Esophagus muscularis mucosa (tissue), 4 donors: ENCODE measurements at regions of chr15 and their contacts with region 1.

Region 1: DNA sequence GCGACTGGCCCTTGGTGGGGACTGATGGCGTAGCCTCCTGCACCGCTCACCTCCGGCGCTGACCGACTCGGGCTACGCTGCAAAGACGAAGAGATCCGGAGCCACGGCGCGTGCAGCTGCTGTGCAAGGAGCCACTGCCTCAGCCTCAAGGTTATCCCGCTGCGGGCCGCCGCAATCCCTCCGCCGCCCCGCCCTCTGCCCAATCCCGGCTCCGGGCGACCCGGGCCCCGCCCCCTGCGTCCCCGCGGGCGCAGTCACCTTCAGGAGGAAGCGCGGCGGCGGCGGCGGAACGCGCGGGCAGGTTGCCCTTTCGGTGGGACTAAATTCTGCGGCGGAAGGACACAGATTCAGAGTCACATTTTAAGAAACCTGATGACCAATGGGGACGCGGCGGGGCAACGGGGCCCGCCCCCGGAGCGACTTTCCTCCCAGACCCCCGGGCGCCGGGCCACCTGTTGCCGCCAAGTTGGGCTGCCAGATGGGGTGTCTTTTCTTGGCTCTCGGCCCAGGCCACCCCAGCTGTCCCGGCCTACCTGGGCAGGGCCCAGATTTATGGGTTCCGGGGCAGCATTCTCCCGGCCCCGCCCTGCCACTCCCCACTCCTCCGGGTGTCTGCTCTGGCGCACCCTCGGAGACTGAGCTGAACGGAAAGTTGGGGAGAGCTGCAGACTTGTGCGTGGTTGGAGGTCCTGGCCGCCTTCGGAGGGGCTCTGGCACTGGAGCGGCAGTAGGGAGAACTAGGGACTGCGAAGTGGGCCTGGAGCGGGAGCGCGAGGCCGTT is at the start of gene PKM:
- DNase-seq: peak; percentile 99
- H3K4me3 ChIP-seq: peak within 1 kb of the TSS; percentile 69 to 92 (median 83)
- H3K27ac ChIP-seq: peak within 1 kb of the TSS; percentile 94 to 99 (median 96)
- H3K4me1 ChIP-seq: peaks cover 41 to 49% (median 48%) of the 10 kb centered on the region in 4 donors
- H3K27me3 ChIP-seq: no peaks in the 10 kb centered on the region
- CTCF ChIP-seq: no peak
- EP300 ChIP-seq: no peak
- POLR2A ChIP-seq: peak; percentile 97
- total RNA-seq, gene PKM: 392 to 605 (median 482) TPM

Region 2: DNA sequence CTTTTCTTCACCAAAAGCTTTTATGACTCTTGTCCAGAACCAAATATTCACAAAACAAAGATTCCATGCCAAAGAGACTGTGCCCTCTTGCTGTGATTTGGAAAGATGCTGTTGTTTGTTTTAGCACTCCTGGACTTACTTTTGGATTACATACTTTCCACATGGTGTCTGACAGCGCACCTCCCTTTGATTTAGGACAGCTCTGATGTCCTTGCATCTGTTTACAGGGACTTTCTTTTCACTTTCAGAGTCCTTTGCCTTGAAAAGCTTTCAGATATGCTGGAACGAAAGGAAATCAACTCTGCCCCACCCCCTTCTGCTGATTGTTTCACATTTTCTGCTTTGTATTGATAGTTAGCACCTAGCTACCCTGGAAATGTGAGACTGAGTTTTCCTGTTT is 553.9 kb before region 1 on chr15:
- intact Hi-C with region 1: no loop called
- DNase-seq: no peak
- H3K4me3 ChIP-seq: no peak overlapping the region
- H3K27ac ChIP-seq: peak overlapping the region in 3 of 4 donors; percentile 25 to 42 (median 32)
- H3K4me1 ChIP-seq: peaks cover 28 to 37% (median 32%) of the 10 kb centered on the region in 4 donors
- H3K27me3 ChIP-seq: no peaks in the 10 kb centered on the region
- CTCF ChIP-seq: no peak
- EP300 ChIP-seq: no peak
- POLR2A ChIP-seq: no peak

Region 3: DNA sequence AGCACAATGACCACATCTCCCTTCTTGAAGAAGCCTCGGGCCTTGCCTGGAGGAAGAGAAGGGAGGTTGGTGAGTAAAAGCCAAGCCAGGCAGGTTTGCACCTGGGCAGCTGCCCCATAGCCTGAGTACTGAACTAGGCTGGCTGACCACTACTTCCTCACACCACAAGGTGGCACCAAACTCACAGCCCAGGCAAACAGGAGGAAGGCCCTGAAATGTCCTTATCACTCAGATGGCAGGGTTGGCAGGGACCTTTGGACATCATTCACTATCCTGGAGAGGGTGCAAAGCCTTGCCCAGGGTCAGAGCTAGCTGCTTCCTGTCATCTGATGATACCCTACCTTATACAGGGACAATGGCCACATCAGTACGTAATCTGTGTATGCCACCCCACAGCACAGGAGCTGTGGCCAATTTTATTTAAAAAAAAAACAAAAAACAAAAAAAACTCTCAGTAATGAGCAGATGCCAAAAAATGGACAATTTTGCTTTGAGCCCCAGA is 31.5 kb before region 1 on chr15:
- intact Hi-C with region 1: loop called (anchors 5 kb)
- DNase-seq: no peak
- H3K4me3 ChIP-seq: no peak overlapping the region
- H3K27ac ChIP-seq: peak overlapping the region in 3 of 4 donors; percentile 8 to 37 (median 34)
- H3K4me1 ChIP-seq: peaks cover 34 to 55% (median 49%) of the 10 kb centered on the region in 4 donors
- H3K27me3 ChIP-seq: peaks cover 0 to 19% (median 0%) of the 10 kb centered on the region in 4 donors
- CTCF ChIP-seq: peak; percentile 85 to 95 (median 90)
- EP300 ChIP-seq: no peak
- POLR2A ChIP-seq: no peak

Region 4: DNA sequence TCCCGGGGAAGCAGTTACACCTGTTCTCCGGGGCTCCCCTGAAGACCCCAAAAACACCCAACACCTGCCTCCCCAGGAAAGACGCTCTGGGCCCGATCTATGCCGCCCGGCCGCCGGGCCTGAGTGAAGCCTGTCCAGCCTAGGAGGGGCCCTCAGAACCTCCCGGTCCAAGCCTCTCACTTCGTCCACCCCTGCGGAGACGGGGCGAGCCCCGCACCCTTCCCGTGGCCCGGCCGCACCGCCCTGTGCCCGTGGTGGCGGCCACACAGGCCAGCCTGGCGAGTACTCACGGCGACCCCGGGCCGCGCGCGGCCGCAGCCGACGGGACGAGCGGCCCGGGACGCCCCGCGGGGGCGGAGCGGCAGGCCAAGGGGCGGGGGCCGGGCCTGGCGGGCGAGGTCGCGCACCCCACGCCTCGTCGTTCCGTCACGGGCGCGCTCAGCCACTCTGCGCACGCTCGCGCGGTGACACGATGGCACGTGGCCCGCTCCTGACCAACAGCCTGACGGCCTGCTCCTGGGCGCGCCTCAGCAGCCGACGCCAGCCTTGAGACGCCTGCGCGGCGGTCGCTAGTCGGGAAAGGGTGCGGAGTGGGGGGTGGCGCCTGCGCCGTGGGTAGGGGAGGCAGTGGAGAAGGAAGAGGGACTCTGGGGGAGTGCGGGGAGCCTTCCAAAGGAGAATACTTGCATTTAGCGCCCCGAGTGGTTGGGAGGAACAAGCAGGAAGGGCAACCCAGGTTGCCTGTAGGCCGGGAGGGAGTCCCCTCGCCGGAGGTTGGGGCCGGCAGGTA is 41.2 kb after region 1 on chr15 and contains the start of gene PARP6:
- intact Hi-C with region 1: loop called (anchors 2 kb)
- DNase-seq: peak; percentile 99
- H3K4me3 ChIP-seq: peak within 1 kb of the TSS; percentile 68 to 97 (median 90)
- H3K27ac ChIP-seq: peak within 1 kb of the TSS; percentile 86 to 95 (median 92)
- H3K4me1 ChIP-seq: peaks cover 20 to 40% (median 38%) of the 10 kb centered on the region in 4 donors
- H3K27me3 ChIP-seq: no peaks in the 10 kb centered on the region
- CTCF ChIP-seq: peak; percentile 75 to 80 (median 76)
- EP300 ChIP-seq: no peak
- POLR2A ChIP-seq: peak; percentile 51
- total RNA-seq, gene PARP6: 46.5 to 79.0 (median 53.7) TPM

Region 5: GRCh38 chr15:72521682-72522081 is 290.4 kb after region 1 on chr15:
- intact Hi-C with region 1: no loop called
- DNase-seq: no peak
- H3K4me3 ChIP-seq: no peak overlapping the region
- H3K27ac ChIP-seq: no peak overlapping the region
- H3K4me1 ChIP-seq: peaks cover 2 to 22% (median 10%) of the 10 kb centered on the region in 4 donors
- H3K27me3 ChIP-seq: no peaks in the 10 kb centered on the region
- CTCF ChIP-seq: no peak
- EP300 ChIP-seq: no peak
- POLR2A ChIP-seq: no peak